CD8-positive, alpha-beta memory T cell (primary cell): ENCODE measurements at regions of chr2 and their contacts with region 1.

Region 1: DNA sequence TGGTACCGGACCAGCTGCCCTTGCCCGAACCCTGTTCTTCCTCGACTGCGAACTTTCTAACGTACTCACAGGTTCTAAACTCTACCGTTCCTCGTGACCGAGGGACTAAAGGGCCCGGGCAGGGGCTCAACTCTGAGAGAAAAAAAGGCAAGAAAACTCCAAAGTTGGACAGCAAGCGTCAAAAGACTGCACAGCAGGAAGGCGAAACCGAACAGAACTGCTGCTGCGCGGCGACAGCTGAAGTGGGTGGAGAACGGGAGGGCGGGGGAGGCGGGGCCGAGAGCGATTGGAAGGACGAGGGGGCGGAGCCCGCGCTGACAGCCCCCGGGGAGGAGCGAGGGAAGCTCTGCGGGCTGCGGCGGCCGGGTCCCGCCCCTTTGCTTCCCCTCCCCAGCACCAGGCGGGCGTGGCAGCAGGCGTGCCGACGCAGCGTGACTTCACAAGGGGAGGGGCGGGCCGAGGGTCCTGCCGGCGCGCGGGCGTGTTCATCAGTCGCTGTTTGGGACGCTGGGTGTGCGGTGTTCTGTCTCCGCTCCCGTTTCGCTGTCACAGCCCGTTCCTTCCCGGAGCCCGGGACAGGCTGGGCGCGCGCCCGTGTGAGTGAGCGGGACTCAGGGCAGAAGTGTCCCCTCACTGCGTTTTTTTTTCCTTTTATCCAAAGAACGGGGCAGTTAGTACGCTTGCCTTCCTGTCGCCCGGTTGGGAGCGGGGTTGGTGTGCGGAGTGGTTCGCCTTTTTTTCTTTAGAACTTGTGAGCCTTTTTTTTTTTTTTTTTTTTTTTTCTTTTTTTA is at the start of gene NABP1:
- DNase-seq: peak; percentile 98 to 99 (median 99)
- H3K4me3 ChIP-seq: peak within 1 kb of the TSS; percentile 98
- H3K4me3 Mint-ChIP-seq: peak within 1 kb of the TSS; percentile 89 to 99 (median 98)
- H3K27ac ChIP-seq: peak within 1 kb of the TSS; percentile 100
- H3K27ac Mint-ChIP-seq: peak within 1 kb of the TSS; percentile 98 to 100 (median 99)
- H3K4me1 ChIP-seq: peaks cover 71% of the 10 kb centered on the region
- H3K4me1 Mint-ChIP-seq: peaks cover 61 to 72% (median 71%) of the 10 kb centered on the region in 3 donors
- H3K27me3 ChIP-seq: no peaks in the 10 kb centered on the region
- H3K27me3 Mint-ChIP-seq: no peaks in the 10 kb centered on the region
- total RNA-seq, gene NABP1: 44.9 to 48.2 TPM

Region 2: DNA sequence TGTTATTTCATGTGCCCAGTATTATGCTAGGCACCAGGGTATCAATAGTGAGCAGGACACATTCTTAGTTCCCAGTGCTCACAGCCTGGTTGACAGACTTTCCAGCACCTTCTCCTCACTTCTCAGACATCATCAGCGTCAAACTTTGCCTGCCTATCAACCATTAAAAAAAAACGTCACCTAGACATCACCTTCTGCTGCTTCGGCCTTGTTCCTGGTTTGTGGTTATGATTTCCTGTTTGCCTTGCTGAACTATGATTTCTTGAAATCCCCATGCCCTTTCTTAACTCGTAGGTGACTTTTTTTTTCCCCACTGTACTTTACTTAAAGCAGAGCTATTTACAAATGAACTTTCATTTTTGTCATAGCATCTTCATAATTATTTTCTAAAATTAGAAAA is 60.3 kb before region 1 on chr2:
- CTCF ChIA-PET with region 1: interaction called, 5 read pairs
- POLR2A ChIA-PET with region 1: interaction called, 48 read pairs
- DNase-seq: peak; percentile 13 to 82 (median 66)
- H3K4me3 ChIP-seq: no peak overlapping the region
- H3K4me3 Mint-ChIP-seq: peak overlapping the region; percentile 0 to 69 (median 50)
- H3K27ac ChIP-seq: peak overlapping the region; percentile 2
- H3K27ac Mint-ChIP-seq: peak overlapping the region; percentile 53 to 98 (median 88)
- H3K4me1 ChIP-seq: peaks cover 28% of the 10 kb centered on the region
- H3K4me1 Mint-ChIP-seq: peaks cover 31 to 42% (median 36%) of the 10 kb centered on the region in 3 donors
- H3K27me3 ChIP-seq: no peaks in the 10 kb centered on the region
- H3K27me3 Mint-ChIP-seq: no peaks in the 10 kb centered on the region

Region 3: GRCh38 chr2:191625016-191625415 is 52.8 kb before region 1 on chr2:
- CTCF ChIA-PET with region 1: interaction called, 3 read pairs
- POLR2A ChIA-PET with region 1: interaction called, 25 read pairs
- DNase-seq: peak; percentile 16 to 70 (median 37)
- H3K4me3 ChIP-seq: no peak overlapping the region
- H3K4me3 Mint-ChIP-seq: peak overlapping the region in 1 of 7 donors; percentile 52
- H3K27ac ChIP-seq: peak overlapping the region; percentile 22
- H3K27ac Mint-ChIP-seq: peak overlapping the region; percentile 51 to 95 (median 76)
- H3K4me1 ChIP-seq: peaks cover 25% of the 10 kb centered on the region
- H3K4me1 Mint-ChIP-seq: peaks cover 30 to 53% (median 52%) of the 10 kb centered on the region in 3 donors
- H3K27me3 ChIP-seq: no peaks in the 10 kb centered on the region
- H3K27me3 Mint-ChIP-seq: no peaks in the 10 kb centered on the region

Region 4: GRCh38 chr2:191637182-191638078 is 40.4 kb before region 1 on chr2:
- CTCF ChIA-PET with region 1: interaction called, 4 read pairs
- POLR2A ChIA-PET with region 1: interaction called, 42 read pairs
- DNase-seq: peak in 2 of 5 donors; percentile 16 to 24
- H3K4me3 ChIP-seq: peak overlapping the region; percentile 16
- H3K4me3 Mint-ChIP-seq: peak overlapping the region in 6 of 7 donors; percentile 36 to 73 (median 52)
- H3K27ac ChIP-seq: peak overlapping the region; percentile 64
- H3K27ac Mint-ChIP-seq: peak overlapping the region; percentile 77 to 95 (median 86)
- H3K4me1 ChIP-seq: peaks cover 42% of the 10 kb centered on the region
- H3K4me1 Mint-ChIP-seq: peaks cover 44 to 64% (median 48%) of the 10 kb centered on the region in 3 donors
- H3K27me3 ChIP-seq: no peaks in the 10 kb centered on the region
- H3K27me3 Mint-ChIP-seq: peaks cover 0 to 4% of the 10 kb centered on the region in 2 donors